ENCODE measurements at regions of chr5 and their contacts with region 1.

Region 1: DNA sequence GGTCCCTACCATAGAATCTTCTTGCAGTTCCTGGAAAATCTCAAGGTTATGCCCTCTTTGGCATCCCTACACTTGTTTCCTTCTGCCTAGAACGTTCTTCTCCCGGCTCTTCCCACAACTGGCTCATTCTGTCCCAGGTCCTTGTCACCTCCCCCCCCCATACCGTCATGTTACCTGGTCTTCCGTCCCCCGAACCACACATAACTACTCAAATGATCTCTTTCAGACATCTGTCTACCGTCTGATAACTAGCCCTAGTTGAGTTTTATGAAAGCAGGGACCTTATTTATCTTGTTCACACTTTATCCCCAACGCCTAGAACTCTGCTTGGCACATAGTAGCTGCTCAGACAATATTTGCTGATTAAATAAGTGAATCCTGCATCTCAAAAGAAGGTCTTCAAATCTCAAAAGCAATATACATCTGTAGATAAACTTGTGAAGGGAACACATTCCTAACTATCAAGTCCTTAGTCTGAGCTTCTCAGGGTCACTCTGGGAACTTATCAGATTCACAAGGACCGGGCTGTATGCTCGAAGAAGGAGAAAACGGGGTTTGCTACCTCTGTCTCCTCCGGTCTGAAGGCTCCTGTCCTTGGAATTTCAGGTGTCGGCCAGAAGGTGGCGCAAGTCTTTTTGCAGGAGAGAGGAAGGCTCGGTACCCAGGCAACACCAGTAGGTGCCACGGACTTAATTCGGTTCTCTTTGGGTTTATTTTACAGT is 30.0 kb downstream of the LCP2 start:
- DNase-seq: peak; percentile 84
- H3K4me3 ChIP-seq: peak overlapping the region in 1 of 2 experiments; percentile 53; a peak in 2 of 4 replicates
- H3K27ac ChIP-seq: no peak overlapping the region
- H3K4me1 ChIP-seq: peaks cover 0 to 10% of the 10 kb centered on the region in 2 experiments; a peak in 1 of 4 replicates
- H3K27me3 ChIP-seq: peaks cover 3% of the 10 kb centered on the region; the same call in 1 of the 2 replicates
- CTCF ChIP-seq: peak; percentile 85
- EP300 ChIP-seq: no peak
- RAD21 ChIP-seq: peak; percentile 76

Region 2: GRCh38 chr5:170235876-170236864 is 31.4 kb before region 1 on chr5:
- CTCF ChIA-PET with region 1: interaction called, 10 read pairs
- POLR2A ChIA-PET with region 1: no interaction called
- DNase-seq: no peak
- H3K4me3 ChIP-seq: no peak overlapping the region
- H3K27ac ChIP-seq: no peak overlapping the region
- H3K4me1 ChIP-seq: no peaks in the 10 kb centered on the region
- H3K27me3 ChIP-seq: no peaks in the 10 kb centered on the region; the same call in 1 of the 2 replicates
- CTCF ChIP-seq: no peak
- EP300 ChIP-seq: no peak
- RAD21 ChIP-seq: no peak

Region 3: DNA sequence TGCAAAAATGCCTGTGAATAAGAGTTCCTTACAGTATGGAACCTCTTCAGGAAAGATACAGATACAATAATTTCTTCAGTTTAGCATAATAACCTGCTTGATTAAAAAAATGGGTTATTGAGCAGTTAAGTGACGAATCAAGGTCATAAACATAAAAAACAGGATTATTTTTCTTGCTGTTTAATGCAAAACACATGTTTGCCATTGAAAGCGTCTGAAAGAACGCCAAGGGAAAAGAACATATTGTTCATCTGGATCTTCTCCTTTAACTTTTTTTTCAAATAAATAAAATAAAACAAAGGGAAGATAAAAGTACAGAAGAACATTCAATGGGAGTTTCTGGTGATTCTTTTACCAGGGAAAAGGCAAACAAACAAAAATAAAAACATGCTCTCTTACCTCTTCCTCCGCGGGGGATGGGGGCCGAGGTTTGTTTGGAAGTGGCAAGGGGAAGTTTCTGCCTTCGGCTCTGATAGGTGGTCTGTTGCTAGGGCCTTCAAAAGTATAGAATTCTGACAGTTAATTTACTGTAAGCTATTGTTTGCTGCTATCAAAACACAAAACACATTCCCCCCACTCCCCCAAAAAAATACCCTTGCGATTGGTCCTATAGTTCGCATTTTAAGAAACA is 14.8 kb before region 1 on chr5:
- CTCF ChIA-PET with region 1: interaction called, 16 read pairs
- POLR2A ChIA-PET with region 1: no interaction called
- DNase-seq: peak; percentile 46
- H3K4me3 ChIP-seq: no peak overlapping the region
- H3K27ac ChIP-seq: peak overlapping the region in 1 of 2 experiments; percentile 55; a peak in 1 of 4 replicates
- H3K4me1 ChIP-seq: peaks cover 0 to 10% of the 10 kb centered on the region in 2 experiments; a peak in 2 of 4 replicates
- H3K27me3 ChIP-seq: peaks cover 10% of the 10 kb centered on the region; the same call in 1 of the 2 replicates
- CTCF ChIP-seq: no peak
- EP300 ChIP-seq: no peak
- RAD21 ChIP-seq: no peak

Region 4: GRCh38 chr5:170420780-170421412 is 153.3 kb after region 1 on chr5:
- CTCF ChIA-PET with region 1: interaction called, 70 read pairs
- POLR2A ChIA-PET with region 1: no interaction called
- DNase-seq: peak; percentile 77
- H3K4me3 ChIP-seq: no peak overlapping the region
- H3K27ac ChIP-seq: no peak overlapping the region
- H3K4me1 ChIP-seq: peaks cover 0 to 9% of the 10 kb centered on the region in 2 experiments; a peak in 1 of 4 replicates
- H3K27me3 ChIP-seq: peaks cover 20% of the 10 kb centered on the region
- CTCF ChIP-seq: peak; percentile 84
- EP300 ChIP-seq: no peak
- RAD21 ChIP-seq: peak; percentile 79

Region 5: DNA sequence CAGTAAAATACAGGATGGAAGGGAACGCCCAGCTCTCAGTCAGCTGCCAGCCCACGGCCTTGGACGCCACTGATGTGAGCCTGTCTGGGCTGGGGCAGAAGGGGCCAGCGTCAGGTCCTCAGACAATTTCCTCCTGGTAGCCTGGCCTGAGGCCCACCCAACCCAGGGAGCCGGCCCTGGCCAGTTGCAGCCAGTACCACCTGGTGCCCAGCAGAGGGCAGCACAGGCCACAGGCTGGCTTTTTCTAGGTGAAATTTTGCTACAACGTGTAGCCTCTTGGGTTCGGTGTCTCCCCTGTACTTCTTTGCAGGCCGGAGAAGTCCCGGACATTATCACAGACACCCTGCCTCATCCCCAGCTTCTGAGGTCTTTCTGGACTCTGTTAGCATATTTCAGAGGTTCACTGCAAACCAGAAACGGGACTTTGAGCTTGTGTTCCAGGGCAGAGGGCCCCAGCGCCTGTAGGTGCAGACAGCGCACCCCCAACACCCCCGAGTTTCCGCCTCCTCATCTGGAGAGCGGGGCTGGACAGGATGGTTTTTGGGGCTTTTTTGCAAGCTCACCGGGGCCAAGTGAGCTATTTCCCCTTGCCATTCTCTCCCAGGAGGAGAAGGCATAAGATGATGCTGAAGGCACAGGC is 167.5 kb after region 1 on chr5:
- CTCF ChIA-PET with region 1: interaction called, 16 read pairs
- POLR2A ChIA-PET with region 1: no interaction called
- DNase-seq: peak; percentile 85
- H3K4me3 ChIP-seq: peak overlapping the region in 1 of 2 experiments; percentile 38; a peak in 1 of 4 replicates
- H3K27ac ChIP-seq: no peak overlapping the region
- H3K4me1 ChIP-seq: peaks cover 0 to 8% of the 10 kb centered on the region in 2 experiments; a peak in 1 of 4 replicates
- H3K27me3 ChIP-seq: no peaks in the 10 kb centered on the region
- CTCF ChIP-seq: peak; percentile 97
- EP300 ChIP-seq: no peak
- RAD21 ChIP-seq: peak; percentile 95